ENCODE measurements at regions of chr10 and their contacts with region 1.

Region 1: GRCh38 chr10:117014835-117015234 is 9.8 kb upstream of the SHTN1 start:
- DNase-seq: no peak
- H3K4me3 ChIP-seq: no peak overlapping the region
- H3K27ac ChIP-seq: peak overlapping the region in 5 of 59 donors; percentile 4 to 52 (median 26)
- H3K27me3 ChIP-seq: no peaks in the 10 kb centered on the region
- CTCF ChIP-seq: no peak

Region 2: DNA sequence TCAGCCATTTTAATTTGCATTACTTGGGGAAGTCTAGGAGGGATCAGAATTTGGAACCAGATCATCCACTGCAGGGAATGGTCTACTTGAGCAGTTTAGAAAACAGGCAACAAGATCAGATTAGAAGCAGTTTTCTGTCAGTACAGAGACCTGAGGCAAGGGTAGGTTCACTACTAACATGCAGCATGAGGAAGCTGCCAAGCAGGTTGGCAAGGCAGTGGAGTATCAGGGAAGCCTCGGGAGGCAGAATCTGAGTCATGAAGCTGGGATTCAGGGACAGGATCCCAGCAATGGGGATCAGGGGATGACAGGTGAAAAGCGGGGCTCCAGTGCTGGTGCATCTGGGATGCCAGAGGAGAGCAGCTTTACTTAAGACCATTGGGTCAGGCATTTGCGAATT is 137.4 kb before region 1 on chr10:
- intact Hi-C with region 1: no loop called
- DNase-seq: no peak
- H3K4me3 ChIP-seq: no peak overlapping the region
- H3K27ac ChIP-seq: peak overlapping the region in 7 of 59 donors; percentile 18 to 60 (median 37)
- H3K27me3 ChIP-seq: no peaks in the 10 kb centered on the region
- CTCF ChIP-seq: no peak

Region 3: DNA sequence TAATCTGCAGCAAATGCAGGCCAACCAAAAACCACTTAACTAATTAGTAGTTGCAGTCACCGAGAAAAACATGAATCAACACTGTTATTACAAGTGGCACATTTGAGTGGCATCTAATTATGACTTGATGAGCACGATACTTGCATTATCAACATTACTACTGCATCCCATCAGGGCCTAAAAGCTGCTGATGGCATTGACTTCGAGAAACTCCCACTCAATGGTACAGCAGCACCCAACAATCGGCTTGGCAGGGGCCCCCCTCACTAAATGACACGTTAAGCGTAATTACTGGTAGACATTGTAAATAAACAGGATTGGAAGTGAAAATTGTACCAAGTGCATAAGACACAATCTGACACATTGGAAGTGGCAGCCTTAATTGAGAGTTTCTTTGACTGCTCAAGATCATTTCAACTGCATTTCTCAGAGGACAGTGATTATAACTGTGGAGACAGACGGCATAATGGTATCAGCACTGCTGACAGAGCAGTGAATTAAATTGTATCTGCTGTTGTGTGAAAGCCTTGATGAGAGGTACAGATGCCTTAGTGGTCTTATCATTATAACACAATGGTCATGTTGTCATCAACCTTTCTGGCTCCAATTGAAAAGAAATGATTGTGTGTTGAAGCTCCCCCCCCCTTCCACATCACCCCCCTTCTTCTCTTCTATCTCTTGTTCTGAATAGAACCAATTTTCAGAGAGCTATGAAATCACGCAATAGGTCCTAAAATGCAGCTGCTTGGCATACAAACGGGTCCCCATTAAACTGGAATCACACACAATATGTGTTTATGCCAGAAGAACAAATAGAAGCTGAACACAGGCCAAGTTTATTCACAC is 53.2 kb before region 1 on chr10:
- intact Hi-C with region 1: no loop called
- DNase-seq: peak in 2 of 10 donors; percentile 66 to 80
- H3K4me3 ChIP-seq: peak overlapping the region in 3 of 59 donors; percentile 4 to 24 (median 10)
- H3K27ac ChIP-seq: peak overlapping the region; percentile 61 to 99 (median 92)
- H3K27me3 ChIP-seq: no peaks in the 10 kb centered on the region
- CTCF ChIP-seq: no peak

Region 4: DNA sequence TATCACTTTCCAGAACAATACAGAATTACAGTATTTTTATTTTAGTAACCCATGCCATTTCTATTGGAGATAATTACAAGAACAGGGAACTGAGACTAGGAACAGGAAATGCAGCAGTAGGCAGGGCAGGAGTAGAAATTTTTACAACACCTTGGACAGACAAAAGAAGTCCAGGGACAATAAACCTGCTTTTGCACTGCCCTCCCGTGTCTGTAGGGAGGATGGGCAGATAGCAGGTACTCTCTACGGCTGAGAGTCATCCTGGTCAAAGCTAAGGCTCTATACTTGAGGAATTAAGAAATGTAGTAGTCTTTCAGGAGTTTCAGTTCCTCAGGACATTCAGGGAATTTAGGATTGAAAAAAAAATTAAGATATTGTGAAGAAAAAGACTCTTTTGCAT is 59.8 kb after region 1 on chr10:
- intact Hi-C with region 1: no loop called
- DNase-seq: no peak
- H3K4me3 ChIP-seq: no peak overlapping the region
- H3K27ac ChIP-seq: no peak overlapping the region
- H3K27me3 ChIP-seq: no peaks in the 10 kb centered on the region
- CTCF ChIP-seq: peak in 1 of 56 donors; percentile 22

Region 5: DNA sequence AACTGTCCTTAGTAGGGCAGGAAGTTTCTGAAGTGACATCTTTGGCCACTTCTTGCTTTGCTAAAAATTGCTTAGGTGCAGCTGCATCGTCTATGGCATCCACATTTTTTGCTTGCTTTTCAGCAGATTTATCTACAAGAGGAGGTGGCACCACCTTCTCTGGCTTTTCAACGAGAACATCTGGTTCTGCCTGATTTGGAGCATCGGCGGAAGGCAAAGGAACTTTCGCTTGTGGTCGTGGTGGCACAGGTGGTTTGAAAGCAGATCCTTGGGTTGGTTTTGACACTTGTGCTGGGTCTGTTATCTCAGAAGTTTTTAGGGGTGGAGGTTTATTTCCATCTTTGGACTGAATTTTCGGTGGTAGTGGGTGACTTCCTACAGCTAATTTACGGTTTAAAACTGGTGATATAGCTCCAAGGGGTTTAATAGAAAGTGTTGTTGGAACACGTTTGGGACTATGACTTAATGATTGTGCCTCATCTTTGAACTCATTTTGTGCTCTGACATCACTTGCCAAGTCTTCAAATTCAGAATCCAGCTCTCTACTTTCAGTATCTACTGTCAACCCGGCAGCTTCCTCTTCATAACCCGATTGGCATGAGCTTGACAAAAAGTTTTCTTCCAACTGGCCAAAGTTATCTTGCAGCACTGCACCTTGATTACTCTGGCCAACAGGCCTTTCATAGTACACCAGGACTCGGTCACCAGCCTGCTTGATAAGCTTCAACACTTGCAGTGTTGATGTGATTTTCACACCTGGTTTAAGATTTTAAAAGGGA is 270.1 kb after region 1 on chr10:
- intact Hi-C with region 1: no loop called
- DNase-seq: no peak
- H3K4me3 ChIP-seq: no peak overlapping the region
- H3K27ac ChIP-seq: no peak overlapping the region
- H3K27me3 ChIP-seq: no peaks in the 10 kb centered on the region
- CTCF ChIP-seq: no peak

Region 6: GRCh38 chr10:118341791-118342637 is 1327.2 kb after region 1 on chr10 and contains the start of gene FAM204A:
- intact Hi-C with region 1: loop called in 1 of 2 experiments (anchors 10 kb)
- DNase-seq: peak; percentile 85 to 96 (median 92)
- H3K4me3 ChIP-seq: peak within 1 kb of the TSS; percentile 59 to 100 (median 94)
- H3K27ac ChIP-seq: peak within 1 kb of the TSS in 57 of 59 donors; percentile 8 to 93 (median 81)
- H3K27me3 ChIP-seq: no peaks in the 10 kb centered on the region
- CTCF ChIP-seq: peak in 18 of 56 donors; percentile 3 to 55 (median 16)
- total RNA-seq, gene FAM204A: 52.9 to 109 (median 80.0) TPM

Measured in dorsolateral prefrontal cortex (tissue), 120 donors.